OCI-LY7 (cell line): ENCODE measurements at regions of chr1 and their contacts with region 1.

Region 1: DNA sequence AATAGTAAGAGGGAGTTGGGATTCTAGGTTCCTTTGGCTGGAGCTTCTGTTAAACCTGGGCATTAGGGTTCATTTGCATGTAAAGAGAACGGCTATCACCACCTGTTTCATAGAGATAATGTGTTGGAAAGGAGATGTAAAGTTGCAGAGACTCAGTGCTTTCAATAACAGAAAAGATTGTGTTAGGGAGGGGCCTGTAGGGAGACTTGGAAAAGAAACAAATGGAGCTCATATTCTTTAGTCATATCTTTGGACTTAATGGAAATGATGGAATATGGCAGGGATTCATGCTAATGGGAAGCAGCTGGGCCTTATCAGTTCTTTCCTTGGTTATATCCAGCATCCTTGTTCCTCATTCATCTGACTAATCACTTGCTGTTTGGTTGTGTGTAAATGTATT is 144.9 kb downstream of the CD247 start:
- DNase-seq: no peak
- H3K4me3 ChIP-seq: no peak overlapping the region
- H3K27ac ChIP-seq: no peak overlapping the region
- H3K4me1 ChIP-seq: no peaks in the 10 kb centered on the region
- CTCF ChIP-seq: no peak

Region 2: DNA sequence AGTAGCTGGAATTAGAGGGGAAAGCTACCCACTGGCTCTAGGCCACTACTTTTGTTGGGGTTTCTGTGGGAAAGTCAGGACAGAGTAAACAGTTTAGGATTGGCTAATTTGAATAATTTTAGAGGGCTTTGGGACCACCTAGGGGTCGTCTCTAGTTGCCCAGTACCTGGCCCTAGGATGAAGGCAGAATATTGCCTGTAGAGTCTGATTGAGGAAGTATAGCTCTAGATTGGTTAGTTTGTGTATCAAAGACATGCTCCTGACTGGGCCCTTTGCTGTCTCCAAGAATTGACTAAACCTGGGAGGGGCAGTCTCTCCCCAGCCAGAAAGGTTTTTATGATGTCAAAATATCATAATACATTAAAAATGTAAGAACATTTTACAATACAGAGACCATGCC is 10.8 kb before region 1 on chr1:
- CTCF ChIA-PET with region 1: no interaction called
- POLR2A ChIA-PET with region 1: interaction called, 18 read pairs
- intact Hi-C with region 1: no loop called
- DNase-seq: peak; percentile 39
- H3K4me3 ChIP-seq: peak overlapping the region; percentile 61
- H3K27ac ChIP-seq: peak overlapping the region; percentile 100
- H3K4me1 ChIP-seq: peaks cover 70% of the 10 kb centered on the region
- CTCF ChIP-seq: no peak